Cardiac septum (tissue), 1 donor: ENCODE measurements at regions of chr12 and their contacts with region 1.

Region 1: GRCh38 chr12:110888256-110888991 is 32.0 kb downstream of the MYL2 start:
- DNase-seq: no peak

Region 2: GRCh38 chr12:110449799-110450497 is 438.5 kb before region 1 on chr12 and contains the start of gene ARPC3:
- intact Hi-C with region 1: loop called (anchors 2 kb)
- DNase-seq: peak; percentile 98
- total RNA-seq, gene ARPC3: 102 TPM

Region 3: GRCh38 chr12:110513842-110514241 is 374.6 kb before region 1 on chr12:
- intact Hi-C with region 1: loop called (anchors 5 kb)
- DNase-seq: no peak